ENCODE measurements at regions of chr4 and their contacts with region 1.

Region 1: GRCh38 chr4:47933840-47934239 is 19.5 kb upstream of the NFXL1 start:
- DNase-seq: no peak
- ATAC-seq: peak in 1 of 4 donors; percentile 58
- H3K4me3 ChIP-seq: no peak overlapping the region
- H3K27ac ChIP-seq: no peak overlapping the region
- H3K4me1 ChIP-seq: peaks cover 0 to 5% (median 0%) of the 10 kb centered on the region in 12 donors
- H3K27me3 ChIP-seq: peaks cover 0 to 7% (median 0%) of the 10 kb centered on the region in 9 donors
- CTCF ChIP-seq: peak; percentile 44 to 77 (median 66)
- POLR2A ChIP-seq: no peak

Region 2: DNA sequence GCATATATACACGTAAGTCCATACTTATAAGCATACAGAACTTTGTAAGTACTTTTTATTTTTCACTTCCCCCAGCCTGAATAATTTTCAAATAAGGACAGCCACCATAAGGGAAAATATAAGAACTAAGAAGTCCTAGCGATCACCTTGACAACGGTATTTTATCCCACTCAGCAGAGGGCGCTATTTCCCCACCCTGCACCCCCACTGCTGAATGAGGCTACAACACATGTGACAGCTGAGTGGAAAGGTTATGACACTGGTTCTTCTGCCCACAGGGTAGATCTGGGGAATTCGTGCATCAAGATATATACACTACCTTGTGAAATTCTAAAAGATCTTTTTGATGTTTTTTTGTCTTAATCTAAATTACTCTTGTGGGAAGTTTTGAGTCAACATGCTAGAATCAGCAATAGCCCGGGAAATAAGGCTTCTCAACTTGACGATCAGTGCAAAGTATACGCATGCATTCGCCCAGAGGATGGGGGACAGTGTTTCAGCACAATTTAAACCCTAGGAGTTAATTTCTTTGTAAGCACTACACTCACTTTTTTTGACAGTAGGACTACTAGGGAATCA is 247.5 kb before region 1 on chr4:
- intact Hi-C with region 1: loop called in 7 of 10 experiments (anchors 1 to 5 kb)
- DNase-seq: peak; percentile 18 to 49 (median 42)
- ATAC-seq: peak in 3 of 4 donors; percentile 69 to 83 (median 79)
- H3K4me3 ChIP-seq: no peak overlapping the region
- H3K27ac ChIP-seq: no peak overlapping the region
- H3K4me1 ChIP-seq: peaks cover 0 to 3% (median 0%) of the 10 kb centered on the region in 12 donors
- H3K27me3 ChIP-seq: no peaks in the 10 kb centered on the region
- CTCF ChIP-seq: peak; percentile 52 to 79 (median 67)
- POLR2A ChIP-seq: no peak

Region 3: GRCh38 chr4:48027653-48028052 is 93.8 kb after region 1 on chr4:
- intact Hi-C with region 1: no loop called
- DNase-seq: no peak
- ATAC-seq: no peak
- H3K4me3 ChIP-seq: no peak overlapping the region
- H3K27ac ChIP-seq: no peak overlapping the region
- H3K4me1 ChIP-seq: peaks cover 0 to 9% (median 0%) of the 10 kb centered on the region in 12 donors
- H3K27me3 ChIP-seq: no peaks in the 10 kb centered on the region
- CTCF ChIP-seq: no peak
- POLR2A ChIP-seq: no peak

Region 4: DNA sequence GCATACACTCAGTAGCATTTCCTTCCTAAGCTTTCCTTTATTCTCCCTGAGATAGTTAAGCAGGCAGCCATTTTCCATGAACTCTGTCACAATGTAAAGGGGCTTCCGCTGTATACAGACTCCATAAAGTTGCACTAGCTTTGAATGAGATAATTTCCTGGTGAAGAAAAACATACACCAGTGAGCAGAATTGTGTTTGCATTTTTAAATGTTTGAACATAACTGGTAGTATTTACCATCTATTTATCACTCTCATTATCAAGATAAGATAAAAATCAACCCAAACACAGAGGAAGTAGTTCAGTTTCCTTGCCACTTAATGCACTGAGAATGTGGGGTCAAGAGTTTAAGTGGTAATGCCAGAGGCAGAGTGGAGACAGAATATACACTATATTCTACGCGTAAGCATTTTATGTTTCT is 146.1 kb after region 1 on chr4:
- intact Hi-C with region 1: loop called in 8 of 10 experiments (anchors 5 to 10 kb)
- DNase-seq: no peak
- ATAC-seq: no peak
- H3K4me3 ChIP-seq: no peak overlapping the region
- H3K27ac ChIP-seq: no peak overlapping the region
- H3K4me1 ChIP-seq: no peaks in the 10 kb centered on the region
- H3K27me3 ChIP-seq: no peaks in the 10 kb centered on the region
- CTCF ChIP-seq: no peak
- POLR2A ChIP-seq: no peak

Region 5: GRCh38 chr4:48127682-48128394 is 194.0 kb after region 1 on chr4:
- intact Hi-C with region 1: no loop called
- DNase-seq: peak; percentile 49 to 67 (median 53)
- ATAC-seq: peak; percentile 65 to 87 (median 86)
- H3K4me3 ChIP-seq: peak overlapping the region in 5 of 12 donors; percentile 10 to 42 (median 29)
- H3K27ac ChIP-seq: peak overlapping the region in 8 of 12 donors; percentile 6 to 67 (median 40)
- H3K4me1 ChIP-seq: peaks cover 0 to 51% (median 23%) of the 10 kb centered on the region in 12 donors
- H3K27me3 ChIP-seq: no peaks in the 10 kb centered on the region
- CTCF ChIP-seq: peak; percentile 37 to 68 (median 54)
- POLR2A ChIP-seq: no peak